ENCODE measurements at regions of chr11 and their contacts with region 1.

Region 1: GRCh38 chr11:65274735-65275682 is 13.2 kb downstream of the POLA2 start:
- DNase-seq: peak; percentile 91 to 93
- H3K4me3 ChIP-seq: no peak overlapping the region; the same call in 1 of the 2 replicates
- H3K4me3 Mint-ChIP-seq: peak overlapping the region; percentile 63
- H3K27ac Mint-ChIP-seq: peak overlapping the region; percentile 90
- H3K4me1 ChIP-seq: peaks cover 42% of the 10 kb centered on the region
- H3K4me1 Mint-ChIP-seq: peaks cover 40% of the 10 kb centered on the region
- H3K27me3 ChIP-seq: no peaks in the 10 kb centered on the region
- H3K27me3 Mint-ChIP-seq: no peaks in the 10 kb centered on the region
- CTCF ChIP-seq: peak; percentile 79 to 81

Region 2: DNA sequence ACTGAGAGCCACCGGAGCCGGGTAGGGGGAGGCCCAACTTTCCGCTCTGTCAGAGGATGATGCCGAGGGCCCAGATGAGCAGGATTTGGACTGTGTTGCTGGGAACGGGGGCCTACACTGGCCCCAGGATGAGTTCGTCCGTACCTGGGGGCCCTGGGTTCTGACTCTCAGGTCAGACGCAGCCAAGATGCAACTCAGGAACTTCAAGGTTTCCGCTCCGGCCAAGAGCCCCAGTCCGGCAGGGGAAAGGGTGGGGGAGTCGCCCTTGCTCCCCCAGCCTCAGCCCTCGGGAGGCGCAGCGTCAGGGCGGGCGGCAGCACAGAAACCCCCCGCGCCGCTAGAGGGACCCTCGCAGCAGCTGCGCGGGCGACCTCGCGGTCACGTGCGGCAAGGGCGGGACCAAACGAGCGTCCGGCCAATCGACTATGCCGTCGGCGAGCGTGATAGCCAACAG is 261.3 kb before region 1 on chr11:
- CTCF ChIA-PET with region 1: no interaction called
- POLR2A ChIA-PET with region 1: no interaction called
- intact Hi-C with region 1: no loop called
- DNase-seq: peak in 1 of 2 experiments; percentile 96
- H3K4me3 ChIP-seq: peak overlapping the region; percentile 62
- H3K4me3 Mint-ChIP-seq: peak overlapping the region; percentile 83
- H3K27ac Mint-ChIP-seq: peak overlapping the region; percentile 90
- H3K4me1 ChIP-seq: peaks cover 16% of the 10 kb centered on the region
- H3K4me1 Mint-ChIP-seq: peaks cover 22% of the 10 kb centered on the region
- H3K27me3 ChIP-seq: no peaks in the 10 kb centered on the region
- H3K27me3 Mint-ChIP-seq: no peaks in the 10 kb centered on the region
- CTCF ChIP-seq: peak in 1 of 2 experiments; percentile 71

Region 3: GRCh38 chr11:65225279-65226102 is 49.5 kb before region 1 on chr11:
- CTCF ChIA-PET with region 1: interaction called, 24 read pairs
- POLR2A ChIA-PET with region 1: interaction called, 3 read pairs
- intact Hi-C with region 1: no loop called
- DNase-seq: peak; percentile 69 to 80
- H3K4me3 ChIP-seq: peak overlapping the region; percentile 45
- H3K4me3 Mint-ChIP-seq: peak overlapping the region; percentile 87
- H3K27ac Mint-ChIP-seq: peak overlapping the region; percentile 83
- H3K4me1 ChIP-seq: peaks cover 17% of the 10 kb centered on the region
- H3K4me1 Mint-ChIP-seq: peaks cover 9% of the 10 kb centered on the region
- H3K27me3 ChIP-seq: no peaks in the 10 kb centered on the region
- H3K27me3 Mint-ChIP-seq: no peaks in the 10 kb centered on the region
- CTCF ChIP-seq: peak; percentile 67 to 68

Region 4: GRCh38 chr11:65290448-65291165 is 15.6 kb after region 1 on chr11:
- CTCF ChIA-PET with region 1: interaction called, 41 read pairs
- POLR2A ChIA-PET with region 1: interaction called, 32 read pairs
- intact Hi-C with region 1: loop called (anchors 1 kb)
- DNase-seq: no peak
- H3K4me3 ChIP-seq: no peak overlapping the region
- H3K4me3 Mint-ChIP-seq: peak overlapping the region; percentile 83
- H3K27ac Mint-ChIP-seq: peak overlapping the region; percentile 97
- H3K4me1 ChIP-seq: peaks cover 47% of the 10 kb centered on the region
- H3K4me1 Mint-ChIP-seq: peaks cover 46% of the 10 kb centered on the region
- H3K27me3 ChIP-seq: no peaks in the 10 kb centered on the region
- H3K27me3 Mint-ChIP-seq: no peaks in the 10 kb centered on the region
- CTCF ChIP-seq: no peak

Region 5: GRCh38 chr11:65323813-65324212 is 48.8 kb after region 1 on chr11:
- CTCF ChIA-PET with region 1: interaction called, 148 read pairs
- POLR2A ChIA-PET with region 1: interaction called, 32 read pairs
- intact Hi-C with region 1: no loop called
- DNase-seq: no peak
- H3K4me3 ChIP-seq: no peak overlapping the region
- H3K4me3 Mint-ChIP-seq: no peak overlapping the region
- H3K27ac Mint-ChIP-seq: peak overlapping the region; percentile 38
- H3K4me1 ChIP-seq: peaks cover 4% of the 10 kb centered on the region; the same call in 1 of the 2 replicates
- H3K4me1 Mint-ChIP-seq: peaks cover 7% of the 10 kb centered on the region
- H3K27me3 ChIP-seq: no peaks in the 10 kb centered on the region
- H3K27me3 Mint-ChIP-seq: no peaks in the 10 kb centered on the region
- CTCF ChIP-seq: no peak

Region 6: GRCh38 chr11:65382033-65382807 is 107.2 kb after region 1 on chr11 and contains the start of gene SLC25A45:
- CTCF ChIA-PET with region 1: interaction called, 5 read pairs
- POLR2A ChIA-PET with region 1: interaction called, 13 read pairs
- intact Hi-C with region 1: no loop called
- DNase-seq: peak; percentile 93 to 94
- H3K4me3 ChIP-seq: peak within 1 kb of the TSS; percentile 39
- H3K4me3 Mint-ChIP-seq: peak within 1 kb of the TSS; percentile 69
- H3K27ac Mint-ChIP-seq: peak within 1 kb of the TSS; percentile 90
- H3K4me1 ChIP-seq: peaks cover 56% of the 10 kb centered on the region
- H3K4me1 Mint-ChIP-seq: peaks cover 28% of the 10 kb centered on the region
- H3K27me3 ChIP-seq: no peaks in the 10 kb centered on the region
- H3K27me3 Mint-ChIP-seq: no peaks in the 10 kb centered on the region
- CTCF ChIP-seq: peak; percentile 76 to 94
- total RNA-seq, gene SLC25A45: 8.1 and 8.5 TPM in 2 replicates